Activated CD8-positive, alpha-beta T cell treated with anti-CD3 and anti-CD28 coated beads for 36 hours (primary cell): ENCODE measurements at regions of chr7 and their contacts with region 1.

Region 1: DNA sequence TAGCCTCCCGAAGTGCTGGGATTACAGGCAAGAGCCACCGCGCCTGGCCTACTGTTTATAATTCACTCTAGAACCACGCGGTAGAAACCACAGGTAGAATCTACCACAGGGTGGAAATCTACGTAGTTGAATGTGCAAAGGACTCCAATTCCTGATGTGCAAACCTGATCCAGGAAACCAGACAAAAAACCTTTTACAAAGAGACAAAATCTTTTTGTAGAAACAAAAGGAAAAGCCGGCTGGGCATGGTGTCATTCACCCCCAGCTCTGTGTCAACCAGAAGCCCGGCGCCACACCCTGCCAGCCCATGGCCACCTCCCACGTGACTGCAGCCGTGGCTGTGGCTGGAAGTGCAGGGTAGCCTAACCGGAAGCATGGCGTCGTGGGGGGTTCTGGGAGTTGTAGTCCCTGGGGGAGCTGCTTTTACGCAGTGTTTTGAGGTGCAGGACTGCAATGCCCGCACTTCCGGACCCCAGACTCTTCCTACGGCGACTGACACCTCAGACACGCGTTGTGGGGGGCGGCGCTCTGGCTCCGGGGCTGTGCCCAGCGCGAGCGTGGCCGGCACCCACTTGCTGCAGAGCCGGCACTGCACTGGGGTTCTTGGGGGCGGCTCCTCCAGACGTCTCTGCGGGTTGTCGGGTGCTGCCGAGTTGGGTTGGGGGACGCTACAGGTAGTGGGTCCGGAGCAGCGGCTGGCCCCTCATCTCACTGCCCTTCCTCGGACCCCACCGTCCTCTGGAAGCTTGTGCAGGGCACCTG is 41.5 kb upstream of the RNF216 start:
- DNase-seq: peak; percentile 99
- ATAC-seq: peak; percentile 94
- H3K4me3 Mint-ChIP-seq: peak overlapping the region; percentile 73
- H3K27ac Mint-ChIP-seq: peak overlapping the region; percentile 77
- H3K4me1 Mint-ChIP-seq: peaks cover 28% of the 10 kb centered on the region
- H3K27me3 Mint-ChIP-seq: no peaks in the 10 kb centered on the region
- CTCF ChIP-seq: no peak

Region 2: GRCh38 chr7:5780801-5781496 is 42.0 kb before region 1 on chr7:
- CTCF ChIA-PET with region 1: interaction called, 3 read pairs
- POLR2A ChIA-PET with region 1: interaction called, 4 read pairs
- intact Hi-C with region 1: loop called (anchors 2 kb)
- DNase-seq: peak; percentile 35
- ATAC-seq: peak; percentile 15
- H3K4me3 Mint-ChIP-seq: peak overlapping the region; percentile 78
- H3K27ac Mint-ChIP-seq: peak overlapping the region; percentile 88
- H3K4me1 Mint-ChIP-seq: peaks cover 39% of the 10 kb centered on the region
- H3K27me3 Mint-ChIP-seq: no peaks in the 10 kb centered on the region
- CTCF ChIP-seq: no peak

Region 3: DNA sequence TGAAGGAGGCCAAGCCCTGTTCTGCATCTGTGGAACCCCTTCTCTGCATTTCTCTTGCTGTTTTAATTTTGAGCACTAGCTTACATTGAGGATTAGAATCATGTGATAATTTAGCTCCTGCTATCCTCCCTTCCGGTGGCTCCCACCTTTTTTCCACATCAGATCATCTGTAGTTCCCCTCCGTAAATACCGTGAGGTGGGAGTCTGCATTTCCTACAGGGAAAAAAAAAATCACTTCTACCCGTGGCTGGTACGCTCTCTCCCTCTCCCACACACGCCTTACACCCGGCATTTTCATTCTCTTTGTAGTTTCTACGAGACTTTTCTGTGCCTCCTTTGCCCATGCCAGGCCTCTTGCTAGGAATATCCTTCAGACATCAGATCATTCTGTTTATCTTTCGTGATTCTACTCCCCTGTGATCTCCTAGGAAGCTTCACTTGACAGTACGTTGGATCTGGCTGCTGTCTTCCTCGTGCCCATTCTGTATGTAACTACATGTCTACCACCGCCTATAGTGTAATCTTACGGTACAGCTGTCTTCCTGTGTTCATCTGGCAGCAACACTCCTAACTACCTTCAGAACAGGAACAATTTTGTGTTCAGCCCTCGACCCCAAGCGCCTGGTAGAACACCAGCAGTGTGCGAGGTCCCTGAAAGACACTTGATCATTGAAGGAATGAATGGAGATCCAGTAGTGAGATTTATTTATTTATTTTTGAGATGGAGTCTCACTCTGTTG is 16.0 kb after region 1 on chr7:
- CTCF ChIA-PET with region 1: interaction called, 11 read pairs
- POLR2A ChIA-PET with region 1: interaction called, 5 read pairs
- intact Hi-C with region 1: no loop called
- DNase-seq: no peak
- ATAC-seq: no peak
- H3K4me3 Mint-ChIP-seq: no peak overlapping the region
- H3K27ac Mint-ChIP-seq: no peak overlapping the region
- H3K4me1 Mint-ChIP-seq: peaks cover 19% of the 10 kb centered on the region
- H3K27me3 Mint-ChIP-seq: no peaks in the 10 kb centered on the region
- CTCF ChIP-seq: no peak

Region 4: GRCh38 chr7:6290319-6290741 is 467.4 kb after region 1 on chr7:
- CTCF ChIA-PET with region 1: no interaction called
- POLR2A ChIA-PET with region 1: no interaction called
- intact Hi-C with region 1: no loop called
- DNase-seq: no peak
- ATAC-seq: no peak
- H3K4me3 Mint-ChIP-seq: no peak overlapping the region
- H3K27ac Mint-ChIP-seq: no peak overlapping the region
- H3K4me1 Mint-ChIP-seq: peaks cover 3% of the 10 kb centered on the region
- H3K27me3 Mint-ChIP-seq: no peaks in the 10 kb centered on the region
- CTCF ChIP-seq: no peak